T-cell (primary cell): ENCODE measurements at regions of chr12 and their contacts with region 1.

Region 1: GRCh38 chr12:103884316-103884715 is 43.3 kb upstream of the NT5DC3 start:
- DNase-seq: peak; percentile 13 to 71 (median 41)
- ATAC-seq: peak in 3 of 4 experiments; percentile 51 to 70 (median 60)
- H3K4me3 ChIP-seq: no peak overlapping the region
- H3K4me3 Mint-ChIP-seq: no peak overlapping the region
- H3K27ac ChIP-seq: no peak overlapping the region
- H3K27ac Mint-ChIP-seq: peak overlapping the region in 1 of 2 donors; percentile 1
- H3K4me1 ChIP-seq: peaks cover 3 to 4% of the 10 kb centered on the region in 2 experiments
- H3K4me1 Mint-ChIP-seq: peaks cover 7 to 18% (median 18%) of the 10 kb centered on the region in 3 donors
- H3K27me3 ChIP-seq: no peaks in the 10 kb centered on the region
- H3K27me3 Mint-ChIP-seq: no peaks in the 10 kb centered on the region

Region 2: GRCh38 chr12:103725398-103725797 is 158.9 kb before region 1 on chr12:
- CTCF ChIA-PET with region 1: no interaction called
- POLR2A ChIA-PET with region 1: no interaction called
- DNase-seq: no peak
- ATAC-seq: no peak
- H3K4me3 ChIP-seq: no peak overlapping the region
- H3K4me3 Mint-ChIP-seq: no peak overlapping the region
- H3K27ac ChIP-seq: no peak overlapping the region
- H3K27ac Mint-ChIP-seq: no peak overlapping the region
- H3K4me1 ChIP-seq: no peaks in the 10 kb centered on the region
- H3K4me1 Mint-ChIP-seq: no peaks in the 10 kb centered on the region
- H3K27me3 ChIP-seq: peaks cover 0 to 5% of the 10 kb centered on the region in 2 experiments
- H3K27me3 Mint-ChIP-seq: peaks cover 0 to 3% of the 10 kb centered on the region in 2 donors

Region 3: DNA sequence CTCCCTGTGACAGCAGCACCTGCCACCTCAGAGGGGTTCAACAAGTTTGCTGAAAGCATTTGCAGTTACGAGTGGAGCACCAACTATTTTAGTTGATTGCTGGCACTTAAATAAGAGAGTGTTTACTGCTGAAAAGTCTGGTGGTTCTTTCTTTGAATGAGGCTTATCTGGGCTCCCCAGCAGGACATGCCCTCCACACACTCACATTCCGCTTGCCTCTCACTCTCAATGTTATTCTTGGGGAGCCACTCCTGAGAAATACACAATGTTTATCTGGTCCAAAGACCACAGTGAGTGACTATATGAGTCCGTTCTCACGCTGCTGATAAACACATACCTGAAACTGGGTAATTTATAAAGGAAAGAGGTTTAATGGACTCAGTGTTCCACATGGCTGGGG is 75.2 kb before region 1 on chr12:
- CTCF ChIA-PET with region 1: no interaction called
- POLR2A ChIA-PET with region 1: no interaction called
- DNase-seq: no peak
- ATAC-seq: no peak
- H3K4me3 ChIP-seq: no peak overlapping the region
- H3K4me3 Mint-ChIP-seq: no peak overlapping the region
- H3K27ac ChIP-seq: no peak overlapping the region
- H3K27ac Mint-ChIP-seq: no peak overlapping the region
- H3K4me1 ChIP-seq: no peaks in the 10 kb centered on the region
- H3K4me1 Mint-ChIP-seq: no peaks in the 10 kb centered on the region
- H3K27me3 ChIP-seq: no peaks in the 10 kb centered on the region
- H3K27me3 Mint-ChIP-seq: no peaks in the 10 kb centered on the region

Region 4: GRCh38 chr12:103821773-103822172 is 62.5 kb before region 1 on chr12:
- CTCF ChIA-PET with region 1: no interaction called
- POLR2A ChIA-PET with region 1: no interaction called
- DNase-seq: no peak
- ATAC-seq: no peak
- H3K4me3 ChIP-seq: no peak overlapping the region
- H3K4me3 Mint-ChIP-seq: no peak overlapping the region
- H3K27ac ChIP-seq: no peak overlapping the region
- H3K27ac Mint-ChIP-seq: no peak overlapping the region
- H3K4me1 ChIP-seq: no peaks in the 10 kb centered on the region
- H3K4me1 Mint-ChIP-seq: no peaks in the 10 kb centered on the region
- H3K27me3 ChIP-seq: no peaks in the 10 kb centered on the region
- H3K27me3 Mint-ChIP-seq: no peaks in the 10 kb centered on the region

Region 5: GRCh38 chr12:103965590-103966504 is 81.5 kb after region 1 on chr12 and contains the start of gene TDG:
- CTCF ChIA-PET with region 1: interaction called in 1 of 2 experiments, 15 read pairs
- POLR2A ChIA-PET with region 1: interaction called in 1 of 2 experiments, 3 read pairs
- DNase-seq: peak; percentile 84 to 99 (median 97)
- ATAC-seq: peak; percentile 94 to 96 (median 94)
- H3K4me3 ChIP-seq: peak within 1 kb of the TSS; percentile 68 to 86
- H3K4me3 Mint-ChIP-seq: peak within 1 kb of the TSS; percentile 86 to 97 (median 97)
- H3K27ac ChIP-seq: peak within 1 kb of the TSS; percentile 92
- H3K27ac Mint-ChIP-seq: peak within 1 kb of the TSS; percentile 99
- H3K4me1 ChIP-seq: peaks cover 16 to 38% of the 10 kb centered on the region in 2 experiments
- H3K4me1 Mint-ChIP-seq: peaks cover 58 to 69% (median 68%) of the 10 kb centered on the region in 3 donors
- H3K27me3 ChIP-seq: no peaks in the 10 kb centered on the region
- H3K27me3 Mint-ChIP-seq: no peaks in the 10 kb centered on the region
- total RNA-seq, gene TDG: 25.0 to 32.4 (median 30.0) TPM

Region 6: GRCh38 chr12:104339663-104340062 is 455.3 kb after region 1 on chr12:
- CTCF ChIA-PET with region 1: no interaction called
- POLR2A ChIA-PET with region 1: interaction called in 1 of 2 experiments, 11 read pairs
- DNase-seq: no peak
- ATAC-seq: no peak
- H3K4me3 ChIP-seq: no peak overlapping the region
- H3K4me3 Mint-ChIP-seq: no peak overlapping the region
- H3K27ac ChIP-seq: no peak overlapping the region
- H3K27ac Mint-ChIP-seq: no peak overlapping the region
- H3K4me1 ChIP-seq: no peaks in the 10 kb centered on the region
- H3K4me1 Mint-ChIP-seq: no peaks in the 10 kb centered on the region
- H3K27me3 ChIP-seq: no peaks in the 10 kb centered on the region
- H3K27me3 Mint-ChIP-seq: no peaks in the 10 kb centered on the region